BJ (cell line): ENCODE measurements at regions of chr21 and their contacts with region 1.

Region 1: DNA sequence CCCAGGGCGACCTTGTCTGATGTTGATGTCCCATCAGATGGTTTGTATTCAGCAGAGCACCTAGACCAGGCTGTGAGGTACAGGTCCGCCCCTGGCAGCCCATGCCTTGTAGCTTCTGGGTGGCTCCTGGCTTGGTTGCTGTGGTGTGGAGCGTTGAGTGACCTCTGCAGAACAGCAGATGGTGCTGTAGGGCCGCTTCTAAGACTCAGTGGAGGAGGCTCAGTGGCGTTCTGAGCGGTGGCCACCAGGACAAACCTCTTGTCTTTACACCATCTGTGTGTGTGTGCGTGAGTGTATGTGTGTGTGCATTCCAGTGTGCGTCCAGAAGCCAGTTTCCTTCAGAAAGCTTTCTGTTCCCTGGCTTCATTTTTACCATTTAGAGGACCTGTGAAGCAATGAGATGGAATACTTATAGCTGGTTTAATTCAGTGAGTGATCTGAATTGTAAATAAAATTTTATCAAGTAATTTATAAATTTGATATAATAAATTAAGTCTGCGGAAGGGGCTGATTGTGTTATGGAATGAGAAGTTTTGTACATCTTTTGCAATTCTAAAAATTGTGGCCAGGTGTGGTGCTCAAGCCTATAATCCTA is 66.1 kb downstream of the ADARB1 start:
- DNase-seq: peak; percentile 52
- H3K4me3 ChIP-seq: no peak overlapping the region
- H3K27me3 ChIP-seq: no peaks in the 10 kb centered on the region
- CTCF ChIP-seq: peak; percentile 96

Region 2: DNA sequence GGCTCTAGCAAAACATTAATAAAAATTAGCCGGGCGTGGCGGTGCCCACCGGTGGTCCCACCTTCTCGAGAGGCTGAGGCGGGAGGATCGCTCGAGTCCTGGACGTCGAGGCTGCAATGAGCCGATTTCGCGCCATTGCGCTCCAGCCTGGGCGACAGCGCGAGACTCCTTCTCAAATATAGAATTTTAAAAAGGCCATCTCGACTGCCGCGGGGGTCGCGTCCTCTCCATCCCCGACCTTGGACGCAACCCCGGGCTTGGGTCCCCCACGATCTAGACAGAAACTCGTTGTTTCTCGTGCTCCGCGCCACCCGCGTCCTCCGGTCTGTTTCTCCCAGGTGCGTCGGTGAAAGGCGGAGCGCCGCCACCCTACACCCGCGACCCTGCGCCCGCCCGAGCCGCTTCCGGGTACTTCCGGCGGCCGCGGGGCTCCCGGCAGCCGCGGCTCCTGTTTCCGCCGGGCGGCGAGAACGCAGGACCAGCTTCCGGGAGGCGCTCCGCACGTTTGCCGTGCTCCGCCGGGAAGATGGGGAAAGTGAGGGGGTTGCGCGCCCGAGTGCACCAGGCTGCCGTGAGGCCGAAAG is 200.8 kb before region 1 on chr21 and contains the start of gene SLX9:
- CTCF ChIA-PET with region 1: interaction called, 237 read pairs
- POLR2A ChIA-PET with region 1: no interaction called
- DNase-seq: no peak
- H3K4me3 ChIP-seq: peak within 1 kb of the TSS; percentile 92
- H3K27me3 ChIP-seq: peaks cover 6% of the 10 kb centered on the region
- CTCF ChIP-seq: no peak
- polyA plus RNA-seq, gene SLX9: 12.1 and 12.4 TPM in 2 replicates

Region 3: DNA sequence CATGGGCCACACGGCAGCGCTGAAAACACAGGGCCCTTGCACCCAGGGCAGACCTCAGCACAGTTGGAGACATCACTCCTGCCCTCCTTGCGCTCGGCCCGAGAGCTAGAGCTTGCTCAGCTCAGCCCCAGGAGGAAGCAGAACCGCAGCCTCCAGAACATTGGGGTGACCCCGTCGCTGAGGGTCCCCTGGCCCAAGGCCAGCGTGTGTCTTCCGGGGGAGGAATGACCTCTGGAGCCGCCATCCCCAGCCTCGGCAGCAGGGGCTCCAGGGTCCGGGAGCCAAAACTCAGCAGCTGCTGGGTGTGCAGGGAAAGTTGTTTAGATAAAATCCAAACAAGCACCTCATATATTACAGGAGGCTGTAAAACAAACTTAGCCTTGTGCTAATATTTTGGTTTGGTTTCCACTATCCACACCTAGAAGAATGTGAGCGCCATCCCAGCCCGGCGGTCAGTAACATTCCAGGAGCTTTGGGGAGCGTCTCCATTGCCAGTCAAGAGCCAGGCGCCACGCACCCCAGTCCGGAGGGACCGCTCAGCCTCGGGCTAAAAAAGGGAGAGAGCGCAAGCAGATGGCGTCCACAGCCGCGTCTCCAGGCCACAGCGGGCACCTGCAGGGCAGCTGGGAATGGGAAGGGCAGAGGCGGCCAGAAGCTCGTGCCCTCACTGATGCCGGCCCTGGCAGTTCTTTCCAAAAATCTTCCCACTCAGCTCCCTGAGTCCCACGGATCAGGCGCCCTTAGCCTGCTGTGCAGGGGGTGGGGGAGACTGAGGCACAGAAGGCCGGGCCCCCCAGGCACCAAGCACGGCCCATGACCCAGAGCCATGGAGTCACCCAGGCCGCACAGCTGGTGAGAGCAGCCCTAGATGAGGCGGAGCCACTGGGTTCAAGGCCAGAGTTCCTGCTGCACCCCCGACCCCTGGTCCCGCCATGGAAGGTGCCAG is 148.6 kb before region 1 on chr21:
- CTCF ChIA-PET with region 1: interaction called, 10 read pairs
- POLR2A ChIA-PET with region 1: no interaction called
- DNase-seq: no peak
- H3K4me3 ChIP-seq: no peak overlapping the region
- H3K27me3 ChIP-seq: no peaks in the 10 kb centered on the region
- CTCF ChIP-seq: peak; percentile 26

Region 4: GRCh38 chr21:45152265-45152746 is 11.9 kb after region 1 on chr21:
- CTCF ChIA-PET with region 1: interaction called, 21 read pairs
- POLR2A ChIA-PET with region 1: interaction called, 5 read pairs
- DNase-seq: no peak
- H3K4me3 ChIP-seq: no peak overlapping the region
- H3K27me3 ChIP-seq: no peaks in the 10 kb centered on the region
- CTCF ChIP-seq: no peak

Region 5: DNA sequence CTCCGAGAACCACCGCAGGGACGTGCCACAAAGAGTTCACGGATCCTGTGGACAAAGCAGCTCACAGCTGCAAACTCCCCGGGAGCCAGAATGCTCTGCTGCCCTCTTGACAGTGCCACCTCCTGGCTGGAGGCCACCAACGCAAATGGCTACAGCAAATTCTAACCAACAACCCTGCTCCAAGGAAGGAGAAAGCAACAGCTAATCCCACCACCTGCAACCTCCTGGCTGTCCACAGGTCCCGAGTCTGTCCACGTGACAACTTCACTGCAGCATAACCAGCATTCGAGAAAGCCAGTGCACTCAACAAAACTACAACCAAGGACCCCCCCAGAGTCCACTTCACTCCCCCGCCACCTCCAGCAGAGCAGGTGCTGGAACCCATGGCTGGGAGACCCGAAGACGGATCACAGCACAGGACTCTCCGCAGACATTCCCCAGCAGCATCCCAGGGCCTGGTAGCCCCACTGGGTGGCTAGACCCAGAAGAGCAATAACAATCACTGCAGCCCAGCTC is 129.9 kb after region 1 on chr21:
- CTCF ChIA-PET with region 1: interaction called, 22 read pairs
- POLR2A ChIA-PET with region 1: no interaction called
- DNase-seq: no peak
- H3K4me3 ChIP-seq: no peak overlapping the region
- H3K27me3 ChIP-seq: no peaks in the 10 kb centered on the region
- CTCF ChIP-seq: peak; percentile 29

Region 6: DNA sequence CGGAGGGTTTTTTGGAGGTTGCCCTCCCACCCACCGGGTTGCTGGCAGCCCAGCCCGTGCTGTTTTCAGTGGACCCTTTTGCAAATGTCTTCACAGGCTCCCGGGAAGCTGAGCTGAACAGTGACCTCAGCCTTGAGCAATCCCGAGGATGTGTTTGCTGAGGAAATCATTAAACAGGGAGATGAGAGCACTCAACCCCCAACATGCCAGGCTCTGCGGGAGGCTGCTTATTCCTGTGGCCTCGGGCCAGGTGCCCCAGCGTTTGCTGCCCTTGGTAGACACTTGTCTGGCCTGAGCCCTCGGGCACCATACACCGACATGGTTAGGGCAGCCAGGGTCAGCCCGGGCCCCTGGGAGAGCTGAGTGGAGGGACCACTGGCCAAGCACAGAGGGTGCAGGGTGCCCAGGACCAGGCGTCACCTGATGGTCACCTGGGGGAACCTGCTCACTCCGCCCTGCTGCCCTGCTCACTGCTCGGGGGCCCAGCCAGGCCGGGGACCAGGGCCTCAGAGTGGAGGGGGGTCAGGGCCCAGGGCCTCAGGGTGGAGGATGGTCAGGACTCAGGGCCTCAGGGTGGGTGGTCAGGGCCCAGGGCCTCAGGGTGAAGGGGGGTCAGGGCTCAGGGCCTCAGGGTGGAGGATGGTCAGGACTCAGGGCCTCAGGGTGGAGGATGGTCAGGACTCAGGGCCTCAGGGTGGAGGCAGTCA is 189.8 kb after region 1 on chr21:
- CTCF ChIA-PET with region 1: no interaction called
- POLR2A ChIA-PET with region 1: no interaction called
- DNase-seq: peak; percentile 46
- H3K4me3 ChIP-seq: no peak overlapping the region
- H3K27me3 ChIP-seq: no peaks in the 10 kb centered on the region
- CTCF ChIP-seq: no peak

Region 7: DNA sequence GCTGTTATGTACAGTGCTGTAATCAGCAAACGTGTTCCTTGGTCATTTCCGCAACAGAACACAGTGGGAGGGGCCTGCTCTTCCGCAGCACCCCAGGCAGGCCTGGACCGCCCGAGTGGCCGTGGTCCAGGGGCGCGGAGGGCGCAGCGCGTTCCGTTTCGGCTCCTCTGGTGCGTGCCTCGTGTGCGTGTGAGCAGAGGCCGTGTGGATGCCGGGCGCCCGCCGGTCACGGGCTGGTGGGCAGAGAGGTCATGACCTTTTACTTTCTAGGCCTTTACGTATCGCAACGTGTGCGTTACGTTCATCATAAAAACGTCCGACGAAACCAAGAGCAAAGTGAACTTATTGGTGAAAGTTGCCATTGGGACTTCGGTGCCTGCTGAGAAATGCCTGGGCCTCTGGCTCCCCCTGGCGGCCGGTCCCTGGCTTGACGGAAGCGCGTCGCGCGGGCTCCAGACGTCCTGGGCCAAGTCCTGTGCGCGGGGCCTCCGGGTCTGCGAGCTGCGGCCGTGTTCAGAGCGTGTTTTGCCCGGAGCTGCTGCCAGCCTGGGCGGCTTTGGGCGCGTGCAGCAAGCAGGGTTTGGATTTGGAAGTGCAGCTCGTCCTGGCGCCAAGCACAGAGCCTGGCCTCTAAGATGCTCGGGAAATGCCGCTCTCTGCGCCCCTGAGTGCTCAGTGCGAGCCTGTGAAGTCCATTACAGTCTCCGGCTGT is 298.9 kb after region 1 on chr21:
- CTCF ChIA-PET with region 1: interaction called, 22 read pairs
- POLR2A ChIA-PET with region 1: no interaction called
- DNase-seq: peak; percentile 40
- H3K4me3 ChIP-seq: 0 out of 2 replicates have a peak overlapping the region, but pooled peaks have one; percentile 12
- H3K27me3 ChIP-seq: no peaks in the 10 kb centered on the region
- CTCF ChIP-seq: peak; percentile 93